ENCODE measurements at regions of chr1 and their contacts with region 1.

Region 1: DNA sequence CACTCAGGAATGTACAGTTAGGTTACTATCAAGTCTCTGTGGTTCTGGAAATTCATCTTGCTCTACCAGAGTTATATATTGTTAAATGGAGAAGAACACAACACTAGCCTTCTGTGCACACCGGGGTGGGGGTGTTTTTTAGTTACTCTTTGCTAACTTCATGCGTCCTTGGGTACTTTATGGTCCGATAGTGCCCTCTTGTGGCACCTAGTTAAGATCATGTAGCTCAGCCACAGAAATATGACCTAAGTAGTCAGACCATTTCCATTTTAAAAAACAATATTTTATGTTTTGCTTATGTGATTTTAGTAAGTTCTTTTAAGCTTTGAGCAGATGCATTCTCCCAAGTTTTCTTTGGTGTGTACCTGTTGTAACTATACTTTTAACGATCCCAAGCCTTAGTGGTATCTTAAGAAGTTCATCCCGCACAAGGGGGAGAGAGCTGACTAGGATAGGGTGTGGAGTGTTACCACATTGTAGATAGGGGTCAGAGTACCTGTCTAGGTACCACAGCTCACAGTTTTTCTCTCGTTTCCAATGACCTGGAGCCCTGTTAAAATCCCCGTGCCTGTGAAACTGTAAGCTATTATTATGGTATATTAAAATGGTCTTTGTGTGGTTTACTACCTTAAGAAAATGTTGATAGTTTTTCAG is 20.6 kb upstream of the SH3D21 start:
- DNase-seq: no peak
- H3K4me3 ChIP-seq: no peak overlapping the region
- H3K27ac ChIP-seq: peak overlapping the region; percentile 55 to 71 (median 64)
- H3K4me1 ChIP-seq: peaks cover 32 to 60% (median 60%) of the 10 kb centered on the region in 4 donors
- H3K27me3 ChIP-seq: no peaks in the 10 kb centered on the region
- CTCF ChIP-seq: peak; percentile 73 to 83 (median 80)
- EP300 ChIP-seq: no peak
- POLR2A ChIP-seq: no peak

Region 2: GRCh38 chr1:36172983-36173382 is 112.6 kb before region 1 on chr1:
- intact Hi-C with region 1: no loop called
- DNase-seq: no peak
- H3K4me3 ChIP-seq: no peak overlapping the region
- H3K27ac ChIP-seq: peak overlapping the region; percentile 32 to 44 (median 37)
- H3K4me1 ChIP-seq: peaks cover 79 to 94% (median 85%) of the 10 kb centered on the region in 4 donors
- H3K27me3 ChIP-seq: no peaks in the 10 kb centered on the region
- CTCF ChIP-seq: no peak
- EP300 ChIP-seq: no peak
- POLR2A ChIP-seq: no peak

Region 3: GRCh38 chr1:36224537-36225282 is 60.9 kb before region 1 on chr1:
- intact Hi-C with region 1: loop called (anchors 5 kb)
- DNase-seq: peak; percentile 96
- H3K4me3 ChIP-seq: peak overlapping the region; percentile 81 to 92 (median 86)
- H3K27ac ChIP-seq: peak overlapping the region; percentile 96 to 99 (median 98)
- H3K4me1 ChIP-seq: peaks cover 43 to 58% (median 57%) of the 10 kb centered on the region in 4 donors
- H3K27me3 ChIP-seq: no peaks in the 10 kb centered on the region
- CTCF ChIP-seq: peak; percentile 21 to 55 (median 28)
- EP300 ChIP-seq: no peak
- POLR2A ChIP-seq: no peak

Region 4: DNA sequence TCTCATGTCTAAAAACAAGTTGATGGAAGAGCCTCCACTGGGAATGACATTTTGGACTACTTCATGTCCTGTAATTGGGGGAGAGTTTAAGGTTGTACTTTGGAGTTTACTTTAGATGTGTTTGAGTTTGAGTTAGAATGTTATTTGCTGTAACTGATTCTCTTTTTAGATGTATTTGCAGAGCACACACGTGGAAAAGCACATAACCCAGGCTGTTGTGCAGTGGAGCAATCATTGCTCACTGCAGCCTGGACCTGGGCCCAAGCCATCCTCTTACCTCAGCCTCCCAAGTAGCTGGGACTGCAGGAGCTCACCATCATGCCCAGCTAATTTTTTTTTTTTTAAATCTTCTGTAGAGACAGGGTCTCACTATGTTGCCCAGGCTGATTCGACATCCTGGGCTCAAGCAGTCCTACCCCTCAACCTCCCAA is 16.2 kb before region 1 on chr1:
- intact Hi-C with region 1: no loop called
- DNase-seq: no peak
- H3K4me3 ChIP-seq: no peak overlapping the region
- H3K27ac ChIP-seq: peak overlapping the region in 1 of 4 donors; percentile 4
- H3K4me1 ChIP-seq: peaks cover 27 to 73% (median 45%) of the 10 kb centered on the region in 4 donors
- H3K27me3 ChIP-seq: no peaks in the 10 kb centered on the region
- CTCF ChIP-seq: no peak
- EP300 ChIP-seq: no peak
- POLR2A ChIP-seq: no peak

Measured in esophagus muscularis mucosa (tissue), 4 donors.